A549 (cell line): ENCODE measurements at regions of chr1 and their contacts with region 1.

Region 1: DNA sequence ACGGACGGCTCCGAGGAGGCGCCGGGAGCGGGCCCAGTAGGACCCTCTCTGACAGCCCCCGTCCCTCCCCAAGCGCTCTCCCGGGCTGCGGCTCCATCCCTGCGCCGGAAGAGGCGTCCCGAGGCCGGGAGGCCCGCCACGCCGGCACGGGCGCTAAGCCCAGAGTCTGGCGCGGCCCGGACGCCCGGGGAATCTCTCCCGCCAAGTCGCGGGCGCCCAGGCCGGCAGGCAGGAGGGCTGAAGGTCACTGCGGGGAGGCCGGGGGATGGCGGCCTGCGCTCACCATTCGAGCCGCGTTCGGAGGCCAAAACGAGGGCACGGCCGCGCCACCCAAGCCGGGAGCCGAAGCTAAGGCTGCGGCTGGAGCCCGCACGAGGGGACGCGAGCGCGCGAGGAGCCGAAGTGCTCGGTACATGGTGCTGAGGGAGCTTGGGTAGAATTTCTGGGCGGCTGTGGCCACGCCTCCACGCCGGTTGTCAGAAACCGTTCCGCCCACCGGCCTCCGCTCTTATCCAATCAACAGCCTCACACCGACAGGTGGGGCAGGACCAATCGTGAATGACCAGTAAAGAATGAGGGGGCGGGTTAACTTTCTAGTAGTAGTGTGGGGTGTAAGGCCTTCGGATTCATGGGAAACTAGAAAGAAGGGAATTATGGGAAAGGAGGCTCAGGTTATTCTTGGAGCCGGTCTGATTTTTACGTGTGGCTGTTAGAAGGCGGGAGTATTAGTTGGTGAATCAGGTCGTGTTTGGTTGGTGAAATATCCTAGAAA is at the start of gene FH:
- DNase-seq: peak; percentile 92 to 98
- ATAC-seq: peak; percentile 97 to 98
- H3K4me3 ChIP-seq: peak within 1 kb of the TSS; percentile 96
- H3K27ac ChIP-seq: peak within 1 kb of the TSS; percentile 82 to 96
- H3K4me1 ChIP-seq: peaks cover 10% of the 10 kb centered on the region; the same call in 2 of the 3 replicates
- CTCF ChIP-seq: no peak
- EP300 ChIP-seq: no peak
- POLR2A ChIP-seq: peak; percentile 90
- RAD21 ChIP-seq: no peak
- polyA plus RNA-seq, gene FH: 75.5 and 99.8 TPM in 2 replicates

Region 2: DNA sequence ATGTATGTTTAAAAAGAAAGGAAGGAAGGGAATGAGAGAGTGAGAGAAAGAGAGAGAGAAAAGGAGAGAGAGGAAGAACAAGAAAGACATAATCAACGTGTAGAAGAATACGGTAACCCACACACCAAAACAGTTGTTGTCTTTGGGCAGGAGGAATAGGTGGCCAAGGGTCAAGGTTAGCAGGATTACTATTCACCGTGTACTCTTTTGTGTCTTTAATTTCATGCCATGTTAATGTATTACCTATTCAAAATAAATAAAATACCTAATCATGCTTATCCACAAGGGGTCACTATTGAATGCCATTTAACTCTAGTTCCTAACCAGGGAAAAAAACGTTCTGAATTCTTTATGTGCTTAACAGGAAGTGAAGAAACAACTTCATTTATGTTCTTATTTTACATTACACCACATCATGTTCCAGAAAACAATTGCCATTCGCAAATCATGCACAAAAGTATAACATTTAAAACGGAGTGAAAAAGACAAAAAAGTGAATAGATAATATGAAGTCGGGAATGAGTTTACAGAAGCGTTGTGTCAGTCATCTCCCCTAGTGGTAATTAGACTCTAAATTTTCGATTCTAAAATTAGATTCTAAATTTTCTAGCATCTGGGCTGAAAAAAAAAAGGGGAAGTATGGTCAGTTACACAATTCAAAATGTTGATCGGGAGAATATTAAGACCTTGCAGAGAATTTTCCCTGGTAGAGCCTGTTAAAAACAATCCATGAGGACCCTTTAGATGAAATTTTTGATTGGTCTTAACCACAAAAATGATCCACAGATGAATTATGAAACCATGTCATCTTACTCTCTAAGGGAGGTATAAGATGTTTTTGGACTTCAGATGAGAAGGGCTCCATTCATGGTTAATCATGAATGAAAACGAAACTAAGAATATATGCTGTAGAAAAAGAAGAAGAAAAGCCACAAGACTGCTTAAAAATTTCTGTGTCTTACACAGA is 12.0 kb after region 1 on chr1:
- CTCF ChIA-PET with region 1: interaction called, 10 read pairs
- POLR2A ChIA-PET with region 1: interaction called, 4 read pairs
- DNase-seq: peak; percentile 17 to 77
- ATAC-seq: peak; percentile 92 to 95
- H3K4me3 ChIP-seq: peak overlapping the region; percentile 50
- H3K27ac ChIP-seq: peak overlapping the region; percentile 71 to 76
- H3K4me1 ChIP-seq: 0 out of 3 replicates have a peak, but pooled peaks cover 10% of the 10 kb centered on the region
- CTCF ChIP-seq: peak; percentile 93
- EP300 ChIP-seq: no peak
- POLR2A ChIP-seq: no peak
- RAD21 ChIP-seq: peak; percentile 93

Region 3: GRCh38 chr1:241542199-241542910 is 22.9 kb after region 1 on chr1:
- CTCF ChIA-PET with region 1: no interaction called
- POLR2A ChIA-PET with region 1: no interaction called
- DNase-seq: no peak
- ATAC-seq: no peak
- H3K4me3 ChIP-seq: no peak overlapping the region
- H3K27ac ChIP-seq: no peak overlapping the region
- H3K4me1 ChIP-seq: no peaks in the 10 kb centered on the region
- CTCF ChIP-seq: no peak
- EP300 ChIP-seq: no peak
- POLR2A ChIP-seq: no peak
- RAD21 ChIP-seq: no peak